A673 (cell line): ENCODE measurements at regions of chrX and their contacts with region 1.

Region 1: GRCh38 chrX:151151665-151152267 is 24.6 kb upstream of the GPR50 start:
- DNase-seq: peak; percentile 67
- H3K4me3 ChIP-seq: no peak overlapping the region
- H3K27ac ChIP-seq: no peak overlapping the region
- H3K4me1 ChIP-seq: no peaks in the 10 kb centered on the region
- H3K27me3 ChIP-seq: peaks cover 34% of the 10 kb centered on the region
- CTCF ChIP-seq: peak; percentile 90

Region 2: DNA sequence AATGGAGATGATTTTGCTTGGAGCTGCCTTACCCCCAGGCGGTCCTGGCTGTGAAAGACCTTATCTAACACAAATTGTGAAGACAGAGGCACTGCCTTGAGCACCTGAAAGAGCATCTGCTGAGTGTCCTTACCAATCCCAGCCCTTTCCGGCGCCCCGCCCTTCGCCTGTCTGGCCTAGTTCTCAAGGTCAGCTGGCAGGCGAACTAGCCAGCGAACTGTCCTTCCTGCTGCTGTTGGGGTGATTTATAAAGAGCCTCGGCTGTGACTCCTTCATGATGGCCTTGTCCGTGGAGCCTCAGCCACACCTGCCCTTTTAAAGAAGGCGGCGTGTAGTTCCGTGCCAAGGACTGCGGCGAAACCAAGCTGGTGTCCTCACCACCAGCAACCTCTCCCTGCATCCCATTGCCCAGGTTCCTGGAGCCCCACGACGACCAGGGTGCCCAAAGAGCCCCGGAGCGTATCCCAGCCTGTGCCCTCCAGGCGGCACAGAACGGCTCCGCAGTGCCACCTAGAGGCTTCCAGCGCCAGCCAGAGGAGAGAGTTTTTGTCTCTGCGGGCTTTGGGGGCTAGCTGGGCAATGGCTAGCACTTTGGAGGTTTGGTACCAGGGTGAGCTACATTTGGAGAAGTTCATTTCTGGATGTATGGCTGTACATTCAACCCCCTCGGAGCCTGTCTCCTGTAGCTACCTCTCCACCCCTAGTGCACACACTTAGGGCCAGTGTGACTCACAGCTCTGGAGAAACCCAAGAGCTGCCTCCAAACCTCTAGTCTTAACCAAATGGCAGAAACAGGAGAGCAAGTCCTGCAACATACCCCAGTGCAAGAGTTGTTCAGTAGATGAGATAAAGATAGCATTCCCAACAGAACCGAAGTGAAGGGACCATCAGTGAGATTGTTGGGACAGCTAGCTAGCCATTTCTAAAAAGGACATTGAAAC is 208.4 kb after region 1 on chrX:
- CTCF ChIA-PET with region 1: interaction called, 3 read pairs
- POLR2A ChIA-PET with region 1: no interaction called
- intact Hi-C with region 1: loop called (anchors 1 kb)
- DNase-seq: peak; percentile 41
- H3K4me3 ChIP-seq: no peak overlapping the region
- H3K27ac ChIP-seq: no peak overlapping the region
- H3K4me1 ChIP-seq: no peaks in the 10 kb centered on the region
- H3K27me3 ChIP-seq: peaks cover 7% of the 10 kb centered on the region
- CTCF ChIP-seq: peak; percentile 83

Region 3: GRCh38 chrX:151680805-151681204 is 529.0 kb after region 1 on chrX:
- CTCF ChIA-PET with region 1: interaction called, 3 read pairs
- POLR2A ChIA-PET with region 1: no interaction called
- intact Hi-C with region 1: loop called (anchors 1 kb)
- DNase-seq: peak; percentile 58
- H3K4me3 ChIP-seq: no peak overlapping the region
- H3K27ac ChIP-seq: no peak overlapping the region
- H3K4me1 ChIP-seq: no peaks in the 10 kb centered on the region
- H3K27me3 ChIP-seq: peaks cover 8% of the 10 kb centered on the region
- CTCF ChIP-seq: peak; percentile 74

Region 4: DNA sequence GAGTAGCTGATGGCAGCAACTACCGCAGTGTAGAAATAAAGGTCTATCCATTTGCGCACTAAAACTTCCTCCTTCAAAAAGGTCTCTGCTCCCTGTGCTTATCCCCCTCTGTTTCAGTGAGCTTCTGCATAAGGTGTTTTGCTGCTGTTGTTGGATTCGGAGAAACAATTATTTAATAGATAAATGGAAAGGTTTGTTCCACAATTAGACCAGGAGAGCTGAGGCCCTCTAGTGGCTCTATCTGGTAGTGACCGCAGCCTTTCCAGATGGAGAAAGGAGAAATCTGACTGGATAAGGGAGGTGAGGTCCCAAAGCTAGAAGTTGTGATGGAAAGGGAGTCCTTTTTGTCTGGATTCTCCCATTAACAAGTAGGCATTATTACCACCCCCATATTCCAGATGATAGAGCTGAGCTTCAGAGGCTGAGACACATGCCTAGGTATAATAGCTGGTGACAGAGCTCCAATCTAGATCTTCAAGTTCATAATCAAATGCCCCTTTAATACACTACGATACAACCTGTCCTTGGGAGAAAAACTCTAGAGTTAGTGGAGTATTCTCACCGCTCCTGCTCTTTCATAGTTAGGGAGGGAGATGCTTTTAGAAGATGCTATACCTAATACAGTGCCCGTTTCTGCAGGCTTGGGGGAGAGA is 1480.8 kb after region 1 on chrX:
- CTCF ChIA-PET with region 1: no interaction called
- POLR2A ChIA-PET with region 1: no interaction called
- intact Hi-C with region 1: loop called (anchors 5 kb)
- DNase-seq: peak; percentile 49
- H3K4me3 ChIP-seq: no peak overlapping the region
- H3K27ac ChIP-seq: no peak overlapping the region
- H3K4me1 ChIP-seq: no peaks in the 10 kb centered on the region
- H3K27me3 ChIP-seq: peaks cover 31% of the 10 kb centered on the region
- CTCF ChIP-seq: peak; percentile 89

Region 5: DNA sequence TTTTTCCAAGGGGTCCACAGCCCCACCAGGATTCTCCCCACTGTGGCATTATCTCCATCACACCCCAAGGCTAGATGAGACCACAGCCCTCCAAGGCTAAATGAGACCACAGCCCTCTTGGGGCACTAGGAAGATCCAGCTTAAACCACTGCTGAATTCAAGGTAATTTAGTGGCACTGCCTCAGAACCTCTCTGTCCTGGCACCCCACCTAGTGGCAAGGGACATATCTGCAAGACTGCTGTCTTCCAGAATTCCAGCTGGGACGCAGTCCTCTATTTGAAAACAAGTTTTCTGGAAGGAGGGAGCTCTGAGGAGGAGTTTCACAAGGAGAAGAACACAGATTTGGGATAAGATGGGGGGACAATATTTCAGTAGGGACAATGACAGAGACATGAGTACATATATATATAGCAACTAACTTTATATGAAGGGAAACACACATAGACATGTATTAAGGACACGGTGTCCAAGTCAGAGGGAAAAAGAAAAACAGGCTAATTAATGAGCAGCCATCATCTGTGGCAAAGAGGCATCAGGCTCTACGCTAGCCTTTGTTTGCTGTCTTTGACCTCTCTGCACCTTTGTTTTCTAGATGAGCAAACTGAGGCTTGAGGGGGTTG is 1669.5 kb after region 1 on chrX:
- CTCF ChIA-PET with region 1: no interaction called
- POLR2A ChIA-PET with region 1: no interaction called
- intact Hi-C with region 1: loop called (anchors 10 kb)
- DNase-seq: peak; percentile 51
- H3K4me3 ChIP-seq: no peak overlapping the region
- H3K27ac ChIP-seq: no peak overlapping the region
- H3K4me1 ChIP-seq: no peaks in the 10 kb centered on the region
- H3K27me3 ChIP-seq: peaks cover 26% of the 10 kb centered on the region
- CTCF ChIP-seq: peak; percentile 66